ENCODE measurements at regions of chr3 and their contacts with region 1.

Region 1: GRCh38 chr3:55485211-55485791 is 1.8 kb downstream of the WNT5A start:
- DNase-seq: peak; percentile 89
- CTCF ChIP-seq: peak; percentile 69

Region 2: GRCh38 chr3:55721716-55722484 is 236.6 kb after region 1 on chr3:
- in situ Hi-C with region 1: loop called (anchors 10 kb)
- DNase-seq: peak; percentile 17
- CTCF ChIP-seq: peak; percentile 38

Region 3: DNA sequence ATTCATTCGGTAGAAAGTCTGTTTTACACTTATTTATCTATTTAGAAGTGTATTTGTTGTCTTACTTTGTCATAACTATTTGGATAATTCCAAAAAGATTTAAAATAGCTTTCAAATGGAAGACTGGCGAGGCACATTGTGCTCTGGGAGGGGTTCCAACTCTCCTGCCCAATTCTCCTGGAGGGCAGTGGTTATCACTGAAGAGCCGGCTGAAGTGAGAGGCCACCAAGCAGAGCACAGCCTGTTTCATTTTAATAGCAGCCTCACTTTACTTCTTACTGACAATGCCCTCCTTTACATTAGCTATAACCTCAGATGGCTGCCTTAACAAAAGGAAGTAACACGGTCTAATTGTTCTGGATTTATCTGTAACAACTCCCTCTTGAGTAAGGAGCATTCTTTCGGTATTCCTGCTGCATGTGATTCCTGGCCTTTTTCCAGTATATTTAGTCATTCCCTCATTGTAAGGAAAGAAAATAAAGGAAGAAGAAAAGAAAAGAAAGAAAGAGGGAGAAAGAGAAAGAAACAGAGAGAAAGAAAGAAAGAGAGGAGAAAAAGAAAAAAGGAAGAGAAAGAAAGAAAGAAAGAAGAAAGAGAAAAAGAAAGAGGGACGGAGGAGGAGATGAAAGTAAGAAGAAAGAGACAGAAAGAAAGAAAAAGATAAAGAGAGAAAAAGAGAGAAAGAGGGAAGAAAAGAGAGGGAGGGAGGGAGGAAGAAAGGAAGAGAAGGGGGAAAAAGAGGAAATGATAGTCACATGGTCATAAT is 341.6 kb after region 1 on chr3:
- in situ Hi-C with region 1: no loop called
- DNase-seq: no peak
- CTCF ChIP-seq: no peak

Region 4: GRCh38 chr3:56408761-56409196 is 923.5 kb after region 1 on chr3:
- in situ Hi-C with region 1: no loop called
- DNase-seq: no peak
- CTCF ChIP-seq: no peak

Region 5: DNA sequence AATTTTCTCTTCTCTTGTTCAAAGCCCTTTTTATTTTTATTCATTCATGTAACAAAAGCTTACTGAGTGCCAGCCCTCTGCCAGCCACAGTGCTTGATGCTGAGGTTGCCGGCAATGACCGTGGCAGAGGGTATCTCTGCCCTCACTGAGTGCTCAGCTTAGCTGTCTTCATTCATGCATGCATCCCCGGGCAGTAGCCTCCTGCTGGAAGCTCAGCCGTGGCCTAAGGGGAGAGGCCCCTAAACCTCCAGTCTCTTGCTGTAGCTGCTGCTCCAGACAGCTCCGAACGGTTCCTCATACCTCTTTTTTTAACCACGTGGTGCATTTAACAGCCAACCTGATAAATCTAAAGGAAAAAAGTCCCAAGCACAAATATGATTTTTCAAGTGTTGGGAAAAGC is 1037.1 kb after region 1 on chr3:
- in situ Hi-C with region 1: no loop called
- DNase-seq: no peak
- CTCF ChIP-seq: no peak